ENCODE measurements at regions of chr2 and their contacts with region 1.

Region 1: DNA sequence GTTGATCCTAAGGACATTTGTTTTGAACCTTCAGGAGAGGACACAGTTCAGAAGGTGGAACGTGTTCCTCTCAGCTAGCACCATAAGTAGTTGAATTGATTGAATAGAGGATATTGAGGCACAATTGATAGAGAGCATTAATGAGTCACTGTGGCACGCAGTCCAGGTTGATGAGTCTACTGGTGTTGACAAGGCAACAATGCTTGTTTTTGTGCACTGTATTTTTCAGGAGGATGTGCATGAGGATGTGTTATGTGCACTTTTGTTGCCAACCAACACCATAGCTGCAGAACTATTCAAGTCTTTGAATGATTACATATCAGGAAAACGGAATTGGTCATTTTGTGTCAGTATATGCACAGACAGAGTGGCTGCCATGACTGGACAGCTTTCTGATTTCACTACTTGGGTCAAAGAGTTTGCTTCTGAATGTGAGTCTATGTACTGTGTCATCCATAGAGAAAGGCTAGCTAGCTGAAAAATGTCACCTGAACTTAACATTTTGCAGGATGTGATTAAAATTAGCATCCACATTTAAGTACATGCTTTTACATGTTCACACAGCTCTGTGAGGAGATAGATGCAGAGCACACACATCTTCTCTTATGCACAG is 140.1 kb upstream of the B3GNT2 start:
- DNase-seq: no peak
- ATAC-seq: no peak
- H3K4me3 ChIP-seq: no peak overlapping the region
- H3K27ac ChIP-seq: no peak overlapping the region
- H3K4me1 ChIP-seq: no peaks in the 10 kb centered on the region
- H3K27me3 ChIP-seq: no peaks in the 10 kb centered on the region
- CTCF ChIP-seq: no peak
- EP300 ChIP-seq: no peak
- POLR2A ChIP-seq: no peak
- RAD21 ChIP-seq: no peak

Region 2: DNA sequence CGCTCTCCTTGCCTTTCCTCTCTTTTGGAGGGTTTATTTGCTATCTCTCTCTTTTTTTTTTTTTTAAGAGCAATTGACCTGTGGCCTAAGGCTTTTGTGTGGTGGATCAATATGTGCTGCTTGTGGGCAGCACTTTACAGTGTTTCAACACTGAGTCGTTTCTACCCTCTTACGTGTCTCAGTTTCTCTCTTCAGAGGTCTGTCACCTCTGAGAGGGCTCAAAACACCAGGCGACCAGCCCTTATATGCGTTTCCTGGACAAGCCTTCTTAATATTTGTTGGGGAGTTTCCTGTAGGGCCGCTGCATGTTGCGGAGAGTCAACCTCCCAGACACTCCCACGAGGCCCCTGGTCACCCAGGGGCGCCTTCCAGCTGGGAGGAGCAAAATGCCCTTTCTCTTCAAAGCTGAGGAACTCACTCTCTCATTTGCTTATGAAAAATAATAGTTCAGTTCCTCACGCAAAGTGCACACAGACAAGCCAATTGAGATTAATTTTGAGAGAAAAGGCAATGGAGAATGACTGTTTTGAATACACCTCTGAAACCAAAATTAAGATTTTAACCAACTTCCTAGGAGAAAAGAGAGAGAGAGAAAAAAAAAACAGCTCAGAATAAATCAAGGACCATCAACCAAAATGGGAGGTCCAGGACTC is 43.8 kb after region 1 on chr2:
- CTCF ChIA-PET with region 1: no interaction called
- POLR2A ChIA-PET with region 1: no interaction called
- in situ Hi-C with region 1: no loop called
- intact Hi-C with region 1: loop called (anchors 1 kb)
- DNase-seq: no peak
- ATAC-seq: no peak
- H3K4me3 ChIP-seq: no peak overlapping the region
- H3K27ac ChIP-seq: no peak overlapping the region
- H3K4me1 ChIP-seq: no peaks in the 10 kb centered on the region; the same call in 1 of the 2 replicates
- H3K27me3 ChIP-seq: no peaks in the 10 kb centered on the region
- CTCF ChIP-seq: no peak
- EP300 ChIP-seq: no peak
- POLR2A ChIP-seq: no peak
- RAD21 ChIP-seq: no peak

Measured in HepG2 (cell line).